CD8-positive, alpha-beta T cell (primary cell): ENCODE measurements at regions of chr11 and their contacts with region 1.

Region 1: GRCh38 chr11:110429731-110430266 is at the start of gene FDX1:
- DNase-seq: peak; percentile 53 to 90 (median 79)
- ATAC-seq: peak; percentile 84
- H3K4me3 ChIP-seq: peak within 1 kb of the TSS; percentile 82 to 91
- H3K4me3 Mint-ChIP-seq: peak within 1 kb of the TSS; percentile 97
- H3K27ac ChIP-seq: peak within 1 kb of the TSS; percentile 72 to 84
- H3K27ac Mint-ChIP-seq: peak within 1 kb of the TSS; percentile 97
- H3K4me1 ChIP-seq: peaks cover 37% of the 10 kb centered on the region
- H3K4me1 Mint-ChIP-seq: peaks cover 44% of the 10 kb centered on the region
- H3K27me3 ChIP-seq: no peaks in the 10 kb centered on the region
- H3K27me3 Mint-ChIP-seq: no peaks in the 10 kb centered on the region
- CTCF ChIP-seq: peak; percentile 58
- total RNA-seq, gene FDX1: 11.7 to 12.5 TPM

Region 2: DNA sequence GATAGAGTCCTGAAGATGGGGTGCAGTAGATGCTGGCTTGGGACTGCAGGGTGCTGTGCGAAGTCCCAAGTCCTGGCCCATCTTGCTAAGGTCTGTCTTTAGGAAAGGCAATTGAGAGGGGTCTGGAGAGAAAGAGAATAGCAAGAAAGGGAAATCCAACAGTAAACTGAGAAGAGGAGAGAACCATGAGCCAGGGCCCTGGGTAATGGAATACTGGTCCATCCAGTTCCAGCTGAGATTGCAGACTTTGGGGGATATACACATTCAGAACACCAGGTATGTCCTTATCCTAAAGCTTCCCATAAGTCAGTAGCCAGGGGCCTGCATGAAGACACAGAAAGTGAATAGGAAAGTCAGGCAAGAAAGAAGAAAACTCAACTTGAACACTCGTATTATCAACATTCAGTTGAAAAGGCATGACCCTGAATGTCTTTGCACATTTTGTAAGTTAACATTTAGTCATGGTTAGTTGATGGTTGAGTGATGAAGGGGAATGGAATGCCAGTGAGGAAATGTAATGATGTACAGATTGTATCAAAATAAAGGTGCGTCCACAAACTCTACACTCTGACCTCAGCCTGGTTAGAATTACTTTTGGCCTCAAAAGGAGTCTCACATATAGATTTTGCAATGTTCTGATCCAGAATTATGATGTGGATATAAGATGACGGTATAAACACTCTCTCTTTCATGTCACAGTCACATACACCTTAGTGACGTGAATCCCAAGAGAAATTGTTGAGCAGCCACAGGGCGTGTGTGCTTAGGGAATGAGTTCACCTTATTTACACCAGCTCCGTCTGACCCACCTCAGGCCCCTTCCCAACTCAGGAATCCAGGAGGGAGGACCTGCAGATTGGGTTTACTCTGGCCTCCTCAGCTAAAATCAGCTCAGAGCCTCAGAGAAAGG is 233.7 kb before region 1 on chr11:
- CTCF ChIA-PET with region 1: interaction called, 200 read pairs
- POLR2A ChIA-PET with region 1: interaction called, 7 read pairs
- intact Hi-C with region 1: loop called (anchors 1 kb)
- DNase-seq: no peak
- ATAC-seq: no peak
- H3K4me3 ChIP-seq: no peak overlapping the region
- H3K4me3 Mint-ChIP-seq: no peak overlapping the region
- H3K27ac ChIP-seq: no peak overlapping the region
- H3K27ac Mint-ChIP-seq: no peak overlapping the region
- H3K4me1 ChIP-seq: no peaks in the 10 kb centered on the region
- H3K4me1 Mint-ChIP-seq: peaks cover 10% of the 10 kb centered on the region
- H3K27me3 ChIP-seq: no peaks in the 10 kb centered on the region
- H3K27me3 Mint-ChIP-seq: no peaks in the 10 kb centered on the region
- CTCF ChIP-seq: no peak

Region 3: GRCh38 chr11:110296226-110297075 is 133.3 kb before region 1 on chr11 and contains the start of gene RDX:
- CTCF ChIA-PET with region 1: interaction called, 3 read pairs
- POLR2A ChIA-PET with region 1: interaction called, 3 read pairs
- intact Hi-C with region 1: loop called (anchors 1 to 5 kb)
- DNase-seq: peak; percentile 15 to 79 (median 46)
- ATAC-seq: peak; percentile 61
- H3K4me3 ChIP-seq: peak within 1 kb of the TSS; percentile 73 to 86
- H3K4me3 Mint-ChIP-seq: peak within 1 kb of the TSS; percentile 90
- H3K27ac ChIP-seq: peak within 1 kb of the TSS in 1 of 2 experiments; percentile 42
- H3K27ac Mint-ChIP-seq: peak within 1 kb of the TSS; percentile 75
- H3K4me1 ChIP-seq: peaks cover 7% of the 10 kb centered on the region
- H3K4me1 Mint-ChIP-seq: peaks cover 22% of the 10 kb centered on the region
- H3K27me3 ChIP-seq: no peaks in the 10 kb centered on the region
- H3K27me3 Mint-ChIP-seq: no peaks in the 10 kb centered on the region
- CTCF ChIP-seq: no peak
- total RNA-seq, gene RDX: 7.7 to 7.9 TPM

Region 4: GRCh38 chr11:110447897-110448745 is 18.3 kb after region 1 on chr11:
- CTCF ChIA-PET with region 1: interaction called, 25 read pairs
- POLR2A ChIA-PET with region 1: interaction called, 3 read pairs
- intact Hi-C with region 1: no loop called
- DNase-seq: peak in 2 of 9 experiments; percentile 25 to 47
- ATAC-seq: no peak
- H3K4me3 ChIP-seq: no peak overlapping the region
- H3K4me3 Mint-ChIP-seq: no peak overlapping the region
- H3K27ac ChIP-seq: no peak overlapping the region
- H3K27ac Mint-ChIP-seq: no peak overlapping the region
- H3K4me1 ChIP-seq: no peaks in the 10 kb centered on the region
- H3K4me1 Mint-ChIP-seq: peaks cover 35% of the 10 kb centered on the region
- H3K27me3 ChIP-seq: no peaks in the 10 kb centered on the region
- H3K27me3 Mint-ChIP-seq: no peaks in the 10 kb centered on the region
- CTCF ChIP-seq: peak; percentile 79

Region 5: DNA sequence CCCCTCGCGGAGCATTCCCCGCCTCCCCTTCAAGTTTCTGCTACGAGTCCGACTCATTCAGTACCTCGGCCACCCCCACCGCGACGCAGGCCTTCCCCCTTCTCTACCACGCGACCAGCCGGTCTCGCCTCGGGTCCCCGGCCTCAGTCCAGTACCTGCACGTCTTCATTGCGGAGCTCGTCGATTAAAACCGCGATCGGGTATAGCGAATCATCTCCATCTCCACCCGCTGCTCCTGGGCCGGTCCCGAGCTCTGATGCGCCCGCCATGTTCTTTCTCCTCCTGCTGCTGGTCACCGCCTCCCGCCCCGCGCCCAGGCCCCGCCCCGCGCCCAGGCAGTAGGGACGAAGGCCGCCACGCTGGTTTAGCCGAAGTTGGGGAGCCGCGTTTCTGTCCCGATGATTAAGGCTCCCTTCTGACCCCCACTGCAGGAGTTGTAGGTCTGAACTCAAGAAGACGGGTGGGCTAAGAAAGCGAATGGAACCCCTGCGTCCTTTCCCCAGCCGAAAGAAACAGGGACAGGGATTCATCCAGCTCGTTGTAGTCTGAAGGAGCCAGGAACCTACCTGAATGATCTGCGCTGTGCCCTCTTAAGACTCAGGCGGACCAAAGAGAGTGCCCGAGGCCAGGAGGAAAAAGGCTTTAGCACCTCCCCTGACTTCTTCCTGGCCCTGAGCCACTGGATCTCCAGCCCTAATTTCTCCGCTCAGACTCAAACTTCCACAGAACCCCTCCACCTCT is 1336.5 kb after region 1 on chr11 and contains the start of gene PPP2R1B:
- CTCF ChIA-PET with region 1: no interaction called
- POLR2A ChIA-PET with region 1: no interaction called
- intact Hi-C with region 1: loop called in 1 of 2 experiments (anchors 5 kb)
- DNase-seq: peak; percentile 33 to 83 (median 73)
- ATAC-seq: peak; percentile 98
- H3K4me3 ChIP-seq: peak within 1 kb of the TSS; percentile 86 to 97
- H3K4me3 Mint-ChIP-seq: peak within 1 kb of the TSS; percentile 99
- H3K27ac ChIP-seq: peak within 1 kb of the TSS; percentile 63 to 67
- H3K27ac Mint-ChIP-seq: peak within 1 kb of the TSS; percentile 97
- H3K4me1 ChIP-seq: peaks cover 12% of the 10 kb centered on the region
- H3K4me1 Mint-ChIP-seq: peaks cover 39% of the 10 kb centered on the region
- H3K27me3 ChIP-seq: no peaks in the 10 kb centered on the region
- H3K27me3 Mint-ChIP-seq: no peaks in the 10 kb centered on the region
- CTCF ChIP-seq: no peak
- total RNA-seq, gene PPP2R1B: 47.4 to 53.8 TPM